Breast epithelium (tissue), 4 donors: ENCODE measurements at regions of chr15 and their contacts with region 1.

Region 1: DNA sequence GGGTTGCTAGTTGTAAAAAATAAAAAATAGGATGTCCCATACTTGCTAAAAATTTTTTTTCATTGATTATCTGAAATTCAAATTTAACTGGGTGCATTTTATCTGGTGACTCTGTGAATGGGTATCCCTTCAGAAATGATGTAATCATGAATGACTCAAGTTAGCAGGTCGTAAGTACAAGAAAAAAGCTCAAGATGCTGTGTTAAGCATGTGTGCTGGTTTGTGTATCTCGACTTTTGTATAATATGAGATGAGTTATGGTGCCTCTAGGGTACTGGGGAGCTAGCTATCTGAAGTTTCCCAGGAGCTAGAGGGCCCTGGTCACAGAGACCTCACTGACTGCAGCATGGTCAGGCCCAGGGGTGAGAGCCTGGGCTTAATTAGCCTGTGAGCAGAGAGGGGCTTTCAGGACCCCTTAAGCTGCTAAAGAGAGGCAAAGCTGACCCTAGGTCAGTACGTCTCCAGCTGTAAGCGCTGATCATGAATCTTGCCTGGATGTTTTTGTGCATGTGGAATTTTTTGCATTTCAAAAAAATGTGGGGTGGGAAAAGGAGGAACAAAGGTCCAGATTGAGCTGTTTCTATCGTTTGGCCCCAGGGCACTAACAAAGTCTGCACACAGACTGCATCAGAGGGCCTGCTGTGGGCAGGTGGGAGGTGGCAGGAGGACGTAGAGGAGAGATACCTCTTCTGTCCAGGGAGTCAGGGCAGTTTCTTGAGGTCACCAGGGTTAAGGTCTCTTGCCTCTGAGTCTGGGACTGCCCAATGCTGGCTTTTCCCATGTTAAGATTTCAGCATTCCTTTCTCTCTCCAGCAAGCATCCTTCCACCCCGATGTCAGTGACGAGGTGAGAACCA is 233.2 kb upstream of the TPM1 start:
- DNase-seq: no peak
- H3K4me3 ChIP-seq: no peak overlapping the region
- H3K27ac ChIP-seq: no peak overlapping the region
- H3K4me1 ChIP-seq: no peaks in the 10 kb centered on the region
- H3K27me3 ChIP-seq: no peaks in the 10 kb centered on the region
- CTCF ChIP-seq: no peak
- POLR2A ChIP-seq: no peak

Region 2: GRCh38 chr15:62469874-62470688 is 339.3 kb before region 1 on chr15:
- intact Hi-C with region 1: loop called (anchors 5 kb)
- DNase-seq: no peak
- H3K4me3 ChIP-seq: peak overlapping the region in 1 of 3 donors; percentile 24
- H3K27ac ChIP-seq: peak overlapping the region; percentile 68 to 90
- H3K4me1 ChIP-seq: no peaks in the 10 kb centered on the region
- H3K27me3 ChIP-seq: no peaks in the 10 kb centered on the region
- CTCF ChIP-seq: no peak
- POLR2A ChIP-seq: no peak

Region 3: GRCh38 chr15:62732078-62732477 is 77.3 kb before region 1 on chr15:
- intact Hi-C with region 1: no loop called
- DNase-seq: no peak
- H3K4me3 ChIP-seq: no peak overlapping the region
- H3K27ac ChIP-seq: no peak overlapping the region
- H3K4me1 ChIP-seq: no peaks in the 10 kb centered on the region
- H3K27me3 ChIP-seq: no peaks in the 10 kb centered on the region
- CTCF ChIP-seq: no peak
- POLR2A ChIP-seq: no peak

Region 4: GRCh38 chr15:62742409-62743171 is 66.8 kb before region 1 on chr15:
- intact Hi-C with region 1: no loop called
- DNase-seq: peak in 1 of 2 donors; percentile 47
- H3K4me3 ChIP-seq: no peak overlapping the region
- H3K27ac ChIP-seq: peak overlapping the region; percentile 17 to 83
- H3K4me1 ChIP-seq: peaks cover 0 to 3% of the 10 kb centered on the region in 2 donors
- H3K27me3 ChIP-seq: no peaks in the 10 kb centered on the region
- CTCF ChIP-seq: peak; percentile 71 to 82 (median 72)
- POLR2A ChIP-seq: no peak

Region 5: GRCh38 chr15:62866366-62866765 is 57.0 kb after region 1 on chr15:
- intact Hi-C with region 1: loop called (anchors 2 kb)
- DNase-seq: no peak
- H3K4me3 ChIP-seq: no peak overlapping the region
- H3K27ac ChIP-seq: no peak overlapping the region
- H3K4me1 ChIP-seq: no peaks in the 10 kb centered on the region
- H3K27me3 ChIP-seq: no peaks in the 10 kb centered on the region
- CTCF ChIP-seq: no peak
- POLR2A ChIP-seq: no peak

Region 6: GRCh38 chr15:63048776-63049665 is 239.7 kb after region 1 on chr15:
- intact Hi-C with region 1: no loop called
- DNase-seq: peak in 1 of 2 donors; percentile 55
- H3K4me3 ChIP-seq: peak overlapping the region; percentile 85 to 93 (median 90)
- H3K27ac ChIP-seq: peak overlapping the region; percentile 93 to 95
- H3K4me1 ChIP-seq: peaks cover under 1 to 39% of the 10 kb centered on the region in 2 donors
- H3K27me3 ChIP-seq: no peaks in the 10 kb centered on the region
- CTCF ChIP-seq: peak in 1 of 3 donors; percentile 39
- POLR2A ChIP-seq: no peak

Region 7: DNA sequence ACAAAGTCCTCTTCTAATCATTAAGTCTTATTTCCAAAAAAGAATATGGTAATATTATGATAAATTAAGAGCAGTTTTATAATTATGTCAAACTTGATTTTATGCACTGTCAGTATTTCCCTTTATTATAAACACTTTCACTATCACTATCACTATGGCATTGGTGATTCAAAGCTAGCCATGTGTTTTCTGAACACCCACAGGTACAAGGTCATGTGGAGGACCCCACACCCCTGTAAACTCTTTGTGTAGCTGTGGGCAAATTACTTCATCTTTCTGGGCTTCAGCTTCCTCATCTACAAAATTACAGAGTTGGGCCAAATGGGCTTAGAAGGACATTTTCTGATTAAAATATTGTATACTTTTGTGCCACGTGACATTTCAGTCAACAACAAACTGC is 829.5 kb after region 1 on chr15:
- intact Hi-C with region 1: no loop called
- DNase-seq: no peak
- H3K4me3 ChIP-seq: no peak overlapping the region
- H3K27ac ChIP-seq: no peak overlapping the region
- H3K4me1 ChIP-seq: no peaks in the 10 kb centered on the region
- H3K27me3 ChIP-seq: no peaks in the 10 kb centered on the region
- CTCF ChIP-seq: no peak
- POLR2A ChIP-seq: no peak